CD4-positive, alpha-beta memory T cell (primary cell): ENCODE measurements at regions of chr11 and their contacts with region 1.

Region 1: DNA sequence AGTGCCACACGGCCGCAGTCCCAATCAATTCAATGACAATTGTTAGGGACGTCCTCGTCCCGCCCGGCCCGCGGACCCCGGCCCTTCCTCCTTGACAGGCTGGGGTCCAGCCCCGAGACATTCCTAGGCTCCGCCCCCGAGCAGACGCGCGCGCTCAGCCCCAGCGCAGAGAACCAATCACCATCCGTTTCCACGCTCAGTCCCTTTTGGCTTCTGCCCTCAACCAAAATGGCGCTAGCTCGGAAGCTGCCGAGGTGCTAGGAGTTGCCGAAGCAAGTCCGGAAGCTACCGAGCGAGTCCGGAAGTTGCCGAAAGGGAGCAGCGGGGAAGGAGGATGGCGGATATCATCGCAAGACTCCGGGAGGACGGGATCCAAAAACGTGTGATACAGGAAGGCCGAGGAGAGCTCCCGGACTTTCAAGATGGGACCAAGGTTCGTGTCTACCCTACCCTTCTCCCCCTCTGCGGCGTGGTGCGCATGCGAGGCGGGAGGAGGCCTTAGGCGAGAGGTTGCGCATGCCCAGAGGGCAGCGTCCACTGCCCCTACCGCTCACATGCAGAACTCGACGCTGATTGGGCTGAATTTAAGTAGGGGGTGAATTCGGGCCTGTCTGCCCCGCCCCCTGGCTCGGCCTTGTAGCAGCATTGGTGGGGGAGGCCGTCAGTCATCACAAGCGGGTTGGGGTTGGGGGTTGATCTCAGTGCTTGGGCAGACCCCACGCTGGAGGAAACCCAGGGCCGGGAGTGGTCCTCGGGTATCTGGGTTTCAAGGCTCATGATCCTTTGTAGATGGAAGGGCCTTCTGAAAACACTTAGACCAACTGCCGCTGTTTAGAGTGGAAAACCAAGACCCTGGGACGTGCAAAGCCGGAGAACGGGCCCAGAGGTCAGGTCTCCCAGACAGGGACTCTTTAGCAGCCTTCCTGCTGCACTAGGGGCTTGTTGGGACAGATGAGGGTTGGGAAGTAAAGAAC is at the start of gene AIP:
- DNase-seq: peak; percentile 97 to 98 (median 98)
- H3K4me3 ChIP-seq: peak within 1 kb of the TSS; percentile 64 to 78
- H3K4me3 Mint-ChIP-seq: peak within 1 kb of the TSS; percentile 95 to 100 (median 98)
- H3K27ac ChIP-seq: peak within 1 kb of the TSS; percentile 91
- H3K27ac Mint-ChIP-seq: peak within 1 kb of the TSS; percentile 94 to 100 (median 99)
- H3K4me1 ChIP-seq: peaks cover 57% of the 10 kb centered on the region
- H3K4me1 Mint-ChIP-seq: peaks cover 41 to 59% (median 50%) of the 10 kb centered on the region in 4 donors
- H3K27me3 ChIP-seq: no peaks in the 10 kb centered on the region
- H3K27me3 Mint-ChIP-seq: no peaks in the 10 kb centered on the region
- total RNA-seq, gene AIP: 131 to 132 TPM

Region 2: GRCh38 chr11:67230406-67230805 is 252.7 kb before region 1 on chr11:
- CTCF ChIA-PET with region 1: no interaction called
- POLR2A ChIA-PET with region 1: no interaction called
- intact Hi-C with region 1: no loop called
- DNase-seq: no peak
- H3K4me3 ChIP-seq: no peak overlapping the region
- H3K4me3 Mint-ChIP-seq: no peak overlapping the region
- H3K27ac ChIP-seq: no peak overlapping the region
- H3K27ac Mint-ChIP-seq: peak overlapping the region in 3 of 7 donors; percentile 30 to 70 (median 30)
- H3K4me1 ChIP-seq: peaks cover 18% of the 10 kb centered on the region
- H3K4me1 Mint-ChIP-seq: peaks cover 15 to 29% (median 20%) of the 10 kb centered on the region in 4 donors
- H3K27me3 ChIP-seq: no peaks in the 10 kb centered on the region
- H3K27me3 Mint-ChIP-seq: no peaks in the 10 kb centered on the region

Region 3: DNA sequence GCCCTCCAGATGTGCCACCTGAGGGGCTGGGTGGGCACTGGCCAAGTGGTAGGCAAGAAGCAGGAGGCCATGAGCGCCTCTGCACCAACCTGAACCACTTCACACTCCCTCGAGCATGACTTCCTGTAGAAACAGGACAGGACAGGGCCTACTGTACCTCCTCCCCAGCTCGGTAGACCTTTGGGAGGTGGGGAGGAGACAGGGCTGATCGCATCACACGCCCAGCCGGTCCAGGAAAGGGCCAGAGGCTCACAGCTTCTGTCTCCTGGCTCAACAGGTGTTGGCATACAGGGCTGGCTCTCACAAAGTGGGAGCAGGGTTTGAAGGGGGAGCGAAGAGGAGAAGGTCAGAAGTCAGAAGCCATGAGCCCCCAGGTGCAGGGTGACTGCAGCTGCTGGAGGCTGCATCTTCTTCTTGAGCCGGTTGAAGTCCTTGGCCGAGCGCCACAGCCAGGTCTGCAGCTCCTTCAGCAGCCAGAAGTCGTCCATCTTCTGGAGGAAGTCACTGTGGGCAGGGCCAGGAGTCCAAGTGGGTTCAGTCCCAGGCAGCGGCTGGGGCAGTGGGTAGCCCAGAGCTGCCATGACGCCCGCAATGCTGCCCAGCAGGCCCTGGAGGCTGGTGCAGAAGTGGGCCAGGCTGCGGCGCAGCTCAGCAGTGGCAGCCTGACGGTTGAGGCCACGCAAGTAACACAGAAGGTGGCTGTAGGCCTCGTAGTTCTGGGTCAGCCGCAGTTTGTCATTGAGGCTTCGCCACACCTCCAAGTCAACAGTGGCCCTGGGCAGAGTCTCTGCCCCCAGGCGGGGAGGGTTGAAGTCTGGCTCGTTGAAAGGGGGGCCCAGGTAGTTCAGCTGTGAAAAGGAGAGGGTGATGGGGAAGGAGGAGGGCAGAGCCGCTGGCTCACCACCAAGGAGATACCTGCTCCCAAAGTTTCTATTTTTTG is 118.1 kb before region 1 on chr11:
- CTCF ChIA-PET with region 1: no interaction called
- POLR2A ChIA-PET with region 1: no interaction called
- intact Hi-C with region 1: no loop called
- DNase-seq: no peak
- H3K4me3 ChIP-seq: no peak overlapping the region
- H3K4me3 Mint-ChIP-seq: peak overlapping the region in 7 of 8 donors; percentile 40 to 82 (median 66)
- H3K27ac ChIP-seq: no peak overlapping the region
- H3K27ac Mint-ChIP-seq: peak overlapping the region; percentile 75 to 95 (median 87)
- H3K4me1 ChIP-seq: peaks cover 50% of the 10 kb centered on the region
- H3K4me1 Mint-ChIP-seq: peaks cover 51 to 80% (median 66%) of the 10 kb centered on the region in 4 donors
- H3K27me3 ChIP-seq: no peaks in the 10 kb centered on the region
- H3K27me3 Mint-ChIP-seq: no peaks in the 10 kb centered on the region

Region 4: GRCh38 chr11:67391304-67392132 is 91.6 kb before region 1 on chr11 and contains the start of gene RAD9A:
- CTCF ChIA-PET with region 1: interaction called, 4 read pairs
- POLR2A ChIA-PET with region 1: interaction called, 14 read pairs
- intact Hi-C with region 1: loop called (anchors 1 kb)
- DNase-seq: peak; percentile 86 to 93 (median 89)
- H3K4me3 ChIP-seq: peak within 1 kb of the TSS; percentile 63 to 75
- H3K4me3 Mint-ChIP-seq: peak within 1 kb of the TSS; percentile 87 to 93 (median 91)
- H3K27ac ChIP-seq: peak within 1 kb of the TSS; percentile 79
- H3K27ac Mint-ChIP-seq: peak within 1 kb of the TSS; percentile 82 to 94 (median 87)
- H3K4me1 ChIP-seq: peaks cover 17% of the 10 kb centered on the region
- H3K4me1 Mint-ChIP-seq: peaks cover 23 to 46% (median 36%) of the 10 kb centered on the region in 4 donors
- H3K27me3 ChIP-seq: no peaks in the 10 kb centered on the region
- H3K27me3 Mint-ChIP-seq: no peaks in the 10 kb centered on the region
- total RNA-seq, gene RAD9A: 51.8 to 55.9 TPM

Region 5: DNA sequence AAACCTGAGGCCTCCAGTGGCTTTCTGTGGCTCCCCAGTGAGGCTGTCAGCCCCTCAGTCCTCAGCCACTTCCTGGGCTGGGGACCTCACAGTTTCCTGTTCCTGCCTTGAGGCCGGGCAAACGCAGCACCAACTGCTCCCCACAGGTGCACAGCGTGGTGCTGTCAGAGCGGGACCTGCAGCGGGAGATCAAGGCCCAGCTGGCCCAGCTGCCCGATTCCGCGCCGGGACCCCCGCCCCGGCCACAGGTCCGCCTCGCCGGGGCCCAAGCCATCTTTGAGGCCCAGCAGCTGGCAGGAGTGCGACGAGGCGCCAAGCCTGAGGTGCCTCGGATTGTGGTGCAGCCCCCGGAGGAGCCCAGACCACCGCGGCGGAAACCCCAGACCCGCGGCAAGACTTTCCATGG is 73.8 kb before region 1 on chr11:
- CTCF ChIA-PET with region 1: interaction called, 4 read pairs
- POLR2A ChIA-PET with region 1: interaction called, 194 read pairs
- intact Hi-C with region 1: no loop called
- DNase-seq: peak; percentile 80 to 85 (median 83)
- H3K4me3 ChIP-seq: peak overlapping the region; percentile 48 to 77
- H3K4me3 Mint-ChIP-seq: peak overlapping the region; percentile 85 to 100 (median 94)
- H3K27ac ChIP-seq: peak overlapping the region; percentile 81
- H3K27ac Mint-ChIP-seq: peak overlapping the region; percentile 37 to 98 (median 72)
- H3K4me1 ChIP-seq: peaks cover 91% of the 10 kb centered on the region
- H3K4me1 Mint-ChIP-seq: peaks cover 49 to 97% (median 67%) of the 10 kb centered on the region in 4 donors
- H3K27me3 ChIP-seq: no peaks in the 10 kb centered on the region
- H3K27me3 Mint-ChIP-seq: no peaks in the 10 kb centered on the region

Region 6: DNA sequence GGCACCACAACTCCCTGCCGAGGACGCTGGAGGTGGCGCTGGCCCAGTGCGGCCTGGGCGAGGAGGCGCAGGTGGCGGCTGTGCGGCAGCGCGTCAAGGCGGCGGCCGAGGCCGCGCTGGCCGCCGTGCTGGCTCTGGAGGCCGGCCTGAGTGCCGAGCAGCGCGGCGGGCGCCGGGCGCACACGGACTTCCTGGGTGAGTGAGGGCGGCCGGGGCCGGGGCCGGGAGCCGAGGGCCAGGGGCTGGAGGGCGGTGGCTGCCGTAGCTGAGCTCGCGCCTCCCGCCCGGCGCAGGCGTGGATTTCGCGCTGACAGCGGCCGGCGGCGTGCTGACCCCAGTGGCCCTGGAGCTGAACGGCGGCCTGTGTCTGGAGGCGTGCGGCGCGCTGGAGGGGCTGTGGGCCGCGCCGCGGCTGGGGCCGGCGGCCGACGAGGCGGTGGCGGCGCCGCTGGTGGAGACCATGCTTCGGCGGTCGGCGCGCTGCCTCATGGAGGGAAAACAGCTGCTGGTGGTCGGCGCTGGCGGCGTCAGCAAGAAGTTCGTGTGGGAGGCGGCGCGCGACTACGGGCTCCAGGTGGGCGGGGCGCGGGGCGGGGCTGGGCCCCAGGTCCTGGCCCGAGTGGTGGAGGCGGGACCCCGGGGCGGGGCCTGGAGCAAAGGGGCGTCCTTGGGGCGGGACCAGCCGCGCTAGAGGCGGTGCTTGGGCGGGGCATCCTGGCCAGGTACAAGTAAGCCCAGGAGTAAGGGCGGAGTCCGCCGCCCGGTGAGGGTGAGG is 62.3 kb before region 1 on chr11:
- CTCF ChIA-PET with region 1: no interaction called
- POLR2A ChIA-PET with region 1: interaction called, 33 read pairs
- intact Hi-C with region 1: no loop called
- DNase-seq: peak; percentile 96 to 99 (median 97)
- H3K4me3 ChIP-seq: peak overlapping the region in 1 of 2 donors; percentile 69
- H3K4me3 Mint-ChIP-seq: peak overlapping the region; percentile 67 to 87 (median 80)
- H3K27ac ChIP-seq: peak overlapping the region; percentile 66
- H3K27ac Mint-ChIP-seq: peak overlapping the region; percentile 64 to 94 (median 92)
- H3K4me1 ChIP-seq: peaks cover 53% of the 10 kb centered on the region
- H3K4me1 Mint-ChIP-seq: peaks cover 29 to 63% (median 46%) of the 10 kb centered on the region in 4 donors
- H3K27me3 ChIP-seq: no peaks in the 10 kb centered on the region
- H3K27me3 Mint-ChIP-seq: no peaks in the 10 kb centered on the region

Region 7: GRCh38 chr11:67428052-67428914 is 54.8 kb before region 1 on chr11 and contains the start of gene RPS6KB2:
- CTCF ChIA-PET with region 1: no interaction called
- POLR2A ChIA-PET with region 1: interaction called, 279 read pairs
- intact Hi-C with region 1: no loop called
- DNase-seq: peak; percentile 97 to 99 (median 98)
- H3K4me3 ChIP-seq: peak within 1 kb of the TSS; percentile 94 to 95
- H3K4me3 Mint-ChIP-seq: peak within 1 kb of the TSS; percentile 93 to 100 (median 98)
- H3K27ac ChIP-seq: peak within 1 kb of the TSS; percentile 90
- H3K27ac Mint-ChIP-seq: peak within 1 kb of the TSS; percentile 95 to 99 (median 97)
- H3K4me1 ChIP-seq: peaks cover 49% of the 10 kb centered on the region
- H3K4me1 Mint-ChIP-seq: peaks cover 13 to 61% (median 31%) of the 10 kb centered on the region in 4 donors
- H3K27me3 ChIP-seq: no peaks in the 10 kb centered on the region
- H3K27me3 Mint-ChIP-seq: no peaks in the 10 kb centered on the region
- total RNA-seq, gene RPS6KB2: 78.1 to 79.9 TPM

Region 8: GRCh38 chr11:67439321-67439883 is 43.7 kb before region 1 on chr11:
- CTCF ChIA-PET with region 1: interaction called, 5 read pairs
- POLR2A ChIA-PET with region 1: interaction called, 279 read pairs
- intact Hi-C with region 1: loop called (anchors 1 kb)
- DNase-seq: peak in 1 of 5 donors; percentile 34
- H3K4me3 ChIP-seq: peak overlapping the region; percentile 29 to 81
- H3K4me3 Mint-ChIP-seq: peak overlapping the region; percentile 96 to 99 (median 97)
- H3K27ac ChIP-seq: peak overlapping the region; percentile 78
- H3K27ac Mint-ChIP-seq: peak overlapping the region; percentile 92 to 98 (median 96)
- H3K4me1 ChIP-seq: peaks cover 69% of the 10 kb centered on the region
- H3K4me1 Mint-ChIP-seq: peaks cover 35 to 81% (median 53%) of the 10 kb centered on the region in 4 donors
- H3K27me3 ChIP-seq: no peaks in the 10 kb centered on the region
- H3K27me3 Mint-ChIP-seq: no peaks in the 10 kb centered on the region

Region 9: DNA sequence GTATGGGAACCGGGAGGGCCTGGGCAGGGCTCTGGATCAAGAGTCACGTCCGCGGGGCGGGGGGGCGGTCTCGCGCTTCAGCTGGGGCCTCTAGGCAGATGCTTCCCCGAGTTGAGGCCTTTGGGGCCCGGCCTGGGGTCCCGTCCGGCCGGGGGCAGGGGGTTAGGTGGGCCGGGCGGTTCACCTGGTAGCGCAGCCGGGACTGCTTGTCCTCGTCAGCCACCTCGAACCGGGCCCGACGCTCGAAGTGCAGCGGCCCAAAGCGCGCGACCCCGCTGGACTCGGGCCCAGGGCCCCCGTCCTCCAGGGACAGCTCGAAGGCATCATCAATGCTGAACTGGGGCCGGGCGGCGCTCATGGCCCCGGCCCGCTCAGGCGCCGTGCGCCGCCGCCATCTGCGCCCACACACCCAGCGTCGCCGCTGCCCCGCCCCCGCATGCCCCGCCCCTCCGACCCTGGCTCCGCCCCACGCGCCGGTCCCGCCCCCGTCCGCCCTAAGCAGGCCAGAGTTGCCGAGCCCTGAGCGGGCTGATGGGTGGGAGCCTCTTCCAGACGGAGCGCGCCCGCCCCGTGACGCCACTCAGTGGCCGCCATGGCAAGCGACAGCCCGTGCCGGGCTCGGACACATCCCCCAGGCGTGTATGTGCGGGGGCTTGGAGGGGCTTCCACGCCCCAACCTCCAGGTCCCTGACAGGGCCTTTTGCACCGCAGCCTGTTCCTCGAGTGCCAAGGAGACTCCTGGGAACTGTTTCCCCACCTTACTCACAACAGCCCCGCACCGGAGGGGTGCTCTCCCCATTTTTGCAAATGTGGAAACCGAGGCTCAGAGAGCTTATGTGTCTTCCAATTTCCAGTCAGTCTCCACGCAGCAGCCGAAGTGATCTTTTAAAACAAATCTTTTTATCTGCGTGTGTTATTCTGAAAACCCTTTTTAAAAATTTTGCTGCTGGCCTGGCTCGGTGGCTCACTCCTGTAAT is 14.0 kb before region 1 on chr11 and contains the start of gene TMEM134:
- CTCF ChIA-PET with region 1: interaction called, 9 read pairs
- POLR2A ChIA-PET with region 1: interaction called, 125 read pairs
- intact Hi-C with region 1: loop called (anchors 1 kb)
- DNase-seq: peak; percentile 85 to 88 (median 88)
- H3K4me3 ChIP-seq: peak within 1 kb of the TSS; percentile 78 to 79
- H3K4me3 Mint-ChIP-seq: peak within 1 kb of the TSS; percentile 83 to 92 (median 90)
- H3K27ac ChIP-seq: peak within 1 kb of the TSS; percentile 81
- H3K27ac Mint-ChIP-seq: peak within 1 kb of the TSS; percentile 84 to 96 (median 91)
- H3K4me1 ChIP-seq: peaks cover 46% of the 10 kb centered on the region
- H3K4me1 Mint-ChIP-seq: peaks cover 16 to 36% (median 27%) of the 10 kb centered on the region in 4 donors
- H3K27me3 ChIP-seq: no peaks in the 10 kb centered on the region
- H3K27me3 Mint-ChIP-seq: no peaks in the 10 kb centered on the region
- total RNA-seq, gene TMEM134: 90.1 to 99.1 TPM

Region 10: GRCh38 chr11:67745176-67745726 is 262.1 kb after region 1 on chr11:
- CTCF ChIA-PET with region 1: no interaction called
- POLR2A ChIA-PET with region 1: no interaction called
- intact Hi-C with region 1: no loop called
- DNase-seq: no peak
- H3K4me3 ChIP-seq: no peak overlapping the region
- H3K4me3 Mint-ChIP-seq: no peak overlapping the region
- H3K27ac ChIP-seq: no peak overlapping the region
- H3K27ac Mint-ChIP-seq: peak overlapping the region in 1 of 7 donors; percentile 9
- H3K4me1 ChIP-seq: no peaks in the 10 kb centered on the region
- H3K4me1 Mint-ChIP-seq: no peaks in the 10 kb centered on the region
- H3K27me3 ChIP-seq: no peaks in the 10 kb centered on the region
- H3K27me3 Mint-ChIP-seq: peaks cover 0 to 6% of the 10 kb centered on the region in 2 donors